ENCODE measurements at regions of chr7 and their contacts with region 1.

Region 1: DNA sequence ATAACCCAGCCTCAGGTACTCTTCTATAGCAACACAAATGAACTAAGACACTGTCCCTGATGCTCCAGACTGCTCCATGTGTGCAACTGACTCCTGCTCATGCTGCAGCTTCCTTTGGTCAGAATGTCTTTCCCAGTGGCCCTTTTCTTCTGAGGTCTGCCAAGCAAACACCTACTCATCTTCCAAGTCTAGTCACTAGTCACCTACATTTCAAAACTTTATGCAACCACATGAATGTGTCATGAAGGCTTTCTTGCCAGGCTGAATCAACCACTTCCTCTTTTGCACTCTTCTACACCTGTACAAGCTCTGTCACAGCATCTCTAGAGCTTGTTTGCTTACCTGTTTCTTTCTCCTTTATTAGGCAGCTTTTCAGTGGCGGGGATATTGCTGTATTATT is 75.8 kb downstream of the LSMEM1 start:
- DNase-seq: peak; percentile 60
- H3K4me3 Mint-ChIP-seq: no peak overlapping the region
- H3K27ac Mint-ChIP-seq: no peak overlapping the region
- H3K4me1 Mint-ChIP-seq: peaks cover 14% of the 10 kb centered on the region
- H3K27me3 Mint-ChIP-seq: no peaks in the 10 kb centered on the region

Region 2: DNA sequence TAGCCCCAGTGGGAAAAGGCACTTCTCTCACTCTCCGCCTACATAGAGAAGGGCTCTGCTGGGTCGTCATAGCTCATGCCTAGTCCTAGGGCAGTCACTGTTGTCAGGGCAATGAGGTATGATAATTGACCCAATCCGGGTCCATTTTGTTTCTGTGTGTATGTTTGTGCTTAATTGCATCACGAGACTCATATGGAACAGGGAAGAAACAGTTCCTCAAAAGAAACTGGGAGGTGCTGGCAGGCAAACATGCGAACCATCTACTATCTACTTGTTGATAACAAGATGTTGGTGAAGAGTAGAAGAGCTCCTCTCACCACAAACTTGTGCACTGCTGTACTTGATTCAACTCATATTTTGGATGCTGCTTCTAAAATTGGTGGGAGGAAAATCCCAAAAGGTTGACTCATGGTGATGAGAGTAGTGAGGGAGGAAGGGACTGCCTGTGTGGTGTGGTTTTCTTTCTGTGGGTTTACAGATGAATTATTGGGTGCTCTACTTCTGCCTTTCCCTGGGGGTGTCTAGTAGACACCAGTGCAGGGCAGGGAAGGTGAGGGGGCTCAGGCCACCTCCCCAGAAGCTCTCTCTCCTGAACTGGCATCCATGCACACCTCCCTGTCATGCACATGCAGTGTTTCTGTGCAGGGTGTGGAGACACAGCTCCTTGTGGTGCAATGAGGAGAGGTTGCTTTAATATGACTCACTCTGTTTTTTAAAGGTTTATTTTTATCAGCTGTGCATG is 46.5 kb before region 1 on chr7:
- intact Hi-C with region 1: loop called (anchors 1 kb)
- DNase-seq: peak; percentile 59
- H3K4me3 Mint-ChIP-seq: peak overlapping the region; percentile 49
- H3K27ac Mint-ChIP-seq: peak overlapping the region; percentile 87
- H3K4me1 Mint-ChIP-seq: peaks cover 20% of the 10 kb centered on the region
- H3K27me3 Mint-ChIP-seq: peaks cover 4% of the 10 kb centered on the region

Region 3: DNA sequence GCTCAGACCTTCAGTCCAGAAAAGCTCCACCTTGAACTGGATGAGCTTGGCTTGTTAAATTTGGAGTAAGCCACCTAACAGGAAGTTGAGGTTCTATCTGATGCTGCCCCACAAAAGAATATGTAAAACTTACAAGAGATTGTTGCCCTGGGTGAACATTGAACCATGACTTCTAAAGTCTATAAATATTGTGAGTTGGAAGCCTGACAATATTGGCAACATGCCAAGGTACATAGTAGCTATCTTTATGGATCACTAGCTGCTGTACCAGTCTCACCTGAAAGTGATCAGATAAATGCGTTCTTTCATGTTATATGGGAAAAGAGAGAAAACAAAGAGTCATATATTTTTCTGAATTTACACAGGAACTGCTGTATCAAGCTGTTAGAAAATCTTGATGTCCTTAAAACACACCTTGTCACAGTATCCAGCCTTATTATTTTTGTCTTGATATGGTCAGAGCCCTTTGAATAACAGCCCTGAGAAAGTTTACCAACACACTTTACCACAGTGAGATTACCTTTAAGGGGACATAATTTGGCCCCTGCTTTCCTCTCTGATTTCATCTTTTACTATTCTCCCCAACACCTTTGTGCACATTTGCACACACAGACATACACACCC is 16.2 kb after region 1 on chr7:
- intact Hi-C with region 1: no loop called
- DNase-seq: no peak
- H3K4me3 Mint-ChIP-seq: no peak overlapping the region
- H3K27ac Mint-ChIP-seq: no peak overlapping the region
- H3K4me1 Mint-ChIP-seq: no peaks in the 10 kb centered on the region
- H3K27me3 Mint-ChIP-seq: peaks cover 2% of the 10 kb centered on the region

Region 4: GRCh38 chr7:112646783-112647182 is 90.2 kb after region 1 on chr7:
- intact Hi-C with region 1: no loop called
- DNase-seq: no peak
- H3K4me3 Mint-ChIP-seq: no peak overlapping the region
- H3K27ac Mint-ChIP-seq: no peak overlapping the region
- H3K4me1 Mint-ChIP-seq: no peaks in the 10 kb centered on the region
- H3K27me3 Mint-ChIP-seq: no peaks in the 10 kb centered on the region